Lower leg skin (tissue), 4 donors: ENCODE measurements at regions of chr4 and their contacts with region 1.

Region 1: DNA sequence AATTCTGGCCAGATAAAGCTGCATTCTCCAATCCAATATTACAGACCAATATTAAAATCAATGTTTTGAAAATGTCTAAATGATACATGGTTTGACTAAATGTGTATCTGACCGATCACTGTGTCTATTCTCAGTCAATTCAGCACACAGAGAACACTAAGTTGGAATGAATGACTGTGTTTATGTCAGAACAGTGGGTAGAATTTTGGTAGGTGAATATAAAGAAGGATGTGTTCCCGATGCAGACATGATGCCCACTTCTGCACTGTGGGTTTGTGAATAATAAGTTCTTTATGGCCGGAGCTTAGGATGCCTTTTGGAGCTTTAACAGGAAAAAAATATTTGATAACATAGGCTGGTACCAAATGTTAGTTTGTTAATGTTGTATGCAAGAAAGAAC is 113.2 kb upstream of the GIMD1 start:
- DNase-seq: no peak
- H3K4me3 ChIP-seq: no peak overlapping the region
- CTCF ChIP-seq: no peak
- POLR2A ChIP-seq: no peak

Region 2: DNA sequence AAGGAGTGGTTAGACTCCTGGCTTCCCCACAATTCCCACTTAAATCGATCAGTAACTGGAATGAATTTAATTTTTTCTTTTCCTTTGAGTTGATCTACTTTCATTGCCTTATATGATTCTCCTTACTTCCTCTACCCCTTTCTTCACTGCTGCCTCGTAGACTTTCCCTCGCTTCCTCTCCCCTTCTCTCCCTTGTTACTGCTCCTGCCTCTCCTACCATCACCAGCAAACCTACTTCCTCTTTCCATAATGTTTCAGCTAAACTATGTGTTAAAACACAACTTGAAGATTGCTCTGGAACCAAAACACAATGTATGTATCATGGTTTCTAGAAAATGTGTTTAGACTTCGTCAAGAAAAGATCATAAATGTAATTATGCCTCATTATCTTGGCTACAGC is 1467.2 kb before region 1 on chr4:
- intact Hi-C with region 1: no loop called
- DNase-seq: no peak
- H3K4me3 ChIP-seq: no peak overlapping the region
- CTCF ChIP-seq: no peak
- POLR2A ChIP-seq: no peak

Region 3: DNA sequence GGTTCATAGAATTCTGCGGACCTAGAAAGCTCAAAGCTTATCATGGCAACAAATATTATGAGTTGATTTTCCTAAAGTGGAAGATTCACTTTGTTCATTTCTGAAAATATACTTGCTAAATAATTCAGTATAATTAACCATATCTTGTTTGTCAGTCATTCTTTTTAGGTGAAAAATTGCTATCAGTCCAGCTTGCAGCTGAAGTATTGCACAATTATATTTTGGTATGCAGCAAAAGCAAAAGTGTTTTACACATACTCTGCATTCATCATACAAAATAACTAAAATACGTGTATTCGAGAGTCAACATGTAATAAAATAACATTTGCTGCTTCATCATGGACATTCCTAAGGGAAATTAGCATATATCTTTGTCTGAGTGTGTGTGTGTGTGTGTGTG is 529.5 kb after region 1 on chr4:
- intact Hi-C with region 1: loop called (anchors 5 kb)
- DNase-seq: no peak
- H3K4me3 ChIP-seq: no peak overlapping the region
- CTCF ChIP-seq: no peak
- POLR2A ChIP-seq: no peak